Activated CD4-positive, alpha-beta T cell treated with anti-CD3 and anti-CD28 coated beads for 36 hours (primary cell): ENCODE measurements at regions of chr15 and their contacts with region 1.

Region 1: GRCh38 chr15:41116116-41116871 is at the start of gene INO80:
- DNase-seq: peak; percentile 99
- ATAC-seq: peak; percentile 85
- H3K4me3 Mint-ChIP-seq: peak within 1 kb of the TSS; percentile 80
- H3K27ac Mint-ChIP-seq: peak within 1 kb of the TSS; percentile 98
- H3K4me1 Mint-ChIP-seq: peaks cover 24% of the 10 kb centered on the region
- H3K27me3 Mint-ChIP-seq: no peaks in the 10 kb centered on the region
- total RNA-seq, gene INO80: 22.2 to 25.1 TPM

Region 2: DNA sequence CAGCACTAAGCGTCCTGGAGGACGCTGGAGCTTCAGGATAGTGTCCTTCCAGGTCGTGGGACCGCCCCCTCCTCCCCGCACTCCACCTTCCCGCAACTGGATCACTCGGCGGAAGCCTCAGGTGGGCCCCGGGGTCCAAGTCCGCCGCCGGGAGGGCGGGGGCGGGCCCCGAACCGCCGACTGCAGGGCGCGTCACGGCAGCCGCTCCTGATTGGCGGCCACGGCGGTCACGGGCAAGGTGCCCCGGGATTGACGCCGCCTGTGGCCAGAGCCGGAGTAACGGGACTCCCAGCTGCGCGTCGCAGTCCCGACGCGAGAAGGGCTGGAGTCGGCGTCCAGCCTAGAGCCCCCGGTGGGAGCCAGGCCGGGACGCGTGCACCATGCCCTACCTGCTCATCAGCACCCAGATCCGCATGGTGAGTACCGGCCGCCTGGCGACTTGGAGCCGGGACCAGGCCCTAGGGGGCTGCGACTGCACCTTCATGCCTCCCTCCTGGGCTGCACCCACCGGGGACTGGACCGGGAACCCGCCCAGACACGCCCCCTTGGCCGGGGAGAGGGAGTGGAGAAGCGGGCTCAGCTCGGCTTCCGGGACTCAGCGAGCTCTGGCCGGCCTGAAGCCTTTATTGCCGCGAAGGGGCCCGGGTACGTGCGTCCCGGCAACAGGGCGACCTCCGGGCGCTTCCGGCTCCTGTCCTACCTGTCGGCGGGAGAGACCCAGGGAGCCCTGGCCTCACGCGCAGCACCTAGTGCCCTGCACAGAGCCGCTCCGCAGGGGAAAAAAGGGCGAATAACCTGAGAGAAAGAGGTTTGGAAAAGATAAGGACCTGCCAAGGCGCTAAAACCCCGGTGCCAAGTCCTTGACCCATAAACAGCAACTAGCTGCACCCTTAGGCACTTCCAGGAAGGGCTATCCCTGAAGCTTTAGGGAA is 352.2 kb before region 1 on chr15 and contains the start of gene GCHFR:
- CTCF ChIA-PET with region 1: no interaction called
- POLR2A ChIA-PET with region 1: no interaction called
- intact Hi-C with region 1: loop called in 1 of 2 experiments (anchors 2 kb)
- DNase-seq: peak; percentile 85
- ATAC-seq: peak; percentile 73
- H3K4me3 Mint-ChIP-seq: peak within 1 kb of the TSS; percentile 79
- H3K27ac Mint-ChIP-seq: peak within 1 kb of the TSS; percentile 90
- H3K4me1 Mint-ChIP-seq: peaks cover 35% of the 10 kb centered on the region
- H3K27me3 Mint-ChIP-seq: no peaks in the 10 kb centered on the region
- total RNA-seq, gene GCHFR: 32.8 to 41.1 TPM

Region 3: GRCh38 chr15:40925875-40926658 is 190.2 kb before region 1 on chr15:
- CTCF ChIA-PET with region 1: no interaction called
- POLR2A ChIA-PET with region 1: no interaction called
- intact Hi-C with region 1: no loop called
- DNase-seq: peak; percentile 39
- ATAC-seq: no peak
- H3K4me3 Mint-ChIP-seq: no peak overlapping the region
- H3K27ac Mint-ChIP-seq: no peak overlapping the region
- H3K4me1 Mint-ChIP-seq: peaks cover 31% of the 10 kb centered on the region
- H3K27me3 Mint-ChIP-seq: peaks cover 40% of the 10 kb centered on the region

Region 4: DNA sequence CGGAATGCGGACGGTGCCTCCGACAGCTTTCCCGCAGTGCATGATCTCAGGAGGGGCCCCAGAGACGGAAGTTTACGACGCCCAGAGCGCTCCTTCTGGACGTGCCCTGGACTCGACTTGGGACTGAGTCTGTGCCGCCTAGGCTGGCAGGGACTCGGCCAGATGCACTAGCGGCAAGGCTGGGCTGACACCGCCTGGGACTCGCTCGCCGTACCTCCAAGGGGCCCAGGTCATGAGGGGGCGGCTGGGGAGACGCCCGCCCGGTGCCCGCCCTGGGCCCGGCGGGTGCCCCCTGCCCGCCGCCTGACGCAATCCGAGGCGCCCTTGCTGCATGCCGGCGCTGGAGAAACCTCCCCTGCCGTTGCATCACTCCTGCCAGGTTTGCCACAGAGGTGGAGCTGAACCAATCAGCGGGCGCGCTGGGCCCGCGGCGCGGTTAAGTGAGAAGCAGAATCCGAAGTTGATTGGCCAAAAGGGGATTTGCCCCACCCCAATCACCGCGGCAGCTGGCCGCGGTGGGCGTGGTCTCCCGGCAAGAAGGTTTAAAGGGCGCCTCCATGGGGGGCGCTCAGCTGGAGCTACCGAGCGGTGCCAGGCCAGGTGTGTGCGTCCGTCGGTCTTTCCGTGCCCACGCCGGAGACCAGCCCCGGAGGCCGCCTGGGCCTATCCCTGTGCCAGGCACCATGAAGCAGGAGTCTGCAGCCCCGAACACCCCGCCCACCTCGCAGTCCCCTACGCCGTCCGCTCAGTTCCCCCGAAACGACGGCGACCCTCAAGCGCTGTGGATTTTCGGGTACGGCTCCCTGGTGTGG is 163.2 kb before region 1 on chr15 and contains the start of gene CHAC1:
- CTCF ChIA-PET with region 1: no interaction called
- POLR2A ChIA-PET with region 1: no interaction called
- intact Hi-C with region 1: loop called (anchors 1 kb)
- DNase-seq: peak; percentile 99
- ATAC-seq: peak; percentile 92
- H3K4me3 Mint-ChIP-seq: peak within 1 kb of the TSS; percentile 93
- H3K27ac Mint-ChIP-seq: peak within 1 kb of the TSS; percentile 97
- H3K4me1 Mint-ChIP-seq: peaks cover 25% of the 10 kb centered on the region
- H3K27me3 Mint-ChIP-seq: peaks cover 2% of the 10 kb centered on the region
- total RNA-seq, gene CHAC1: 31.1 to 32.2 TPM

Region 5: GRCh38 chr15:41331833-41332787 is 215.8 kb after region 1 on chr15 and contains the start of gene OIP5:
- CTCF ChIA-PET with region 1: no interaction called
- POLR2A ChIA-PET with region 1: interaction called, 5 read pairs
- intact Hi-C with region 1: loop called (anchors 1 to 5 kb)
- DNase-seq: peak; percentile 99
- ATAC-seq: peak; percentile 98
- H3K4me3 Mint-ChIP-seq: peak within 1 kb of the TSS; percentile 91
- H3K27ac Mint-ChIP-seq: peak within 1 kb of the TSS; percentile 92
- H3K4me1 Mint-ChIP-seq: peaks cover 26% of the 10 kb centered on the region
- H3K27me3 Mint-ChIP-seq: no peaks in the 10 kb centered on the region
- total RNA-seq, gene OIP5: 11.5 to 14.0 TPM

Region 6: GRCh38 chr15:41557673-41558399 is 441.5 kb after region 1 on chr15:
- CTCF ChIA-PET with region 1: no interaction called
- POLR2A ChIA-PET with region 1: no interaction called
- intact Hi-C with region 1: loop called in 1 of 2 experiments (anchors 1 kb)
- DNase-seq: peak; percentile 85
- ATAC-seq: peak; percentile 75
- H3K4me3 Mint-ChIP-seq: peak overlapping the region; percentile 69
- H3K27ac Mint-ChIP-seq: peak overlapping the region; percentile 45
- H3K4me1 Mint-ChIP-seq: peaks cover 20% of the 10 kb centered on the region
- H3K27me3 Mint-ChIP-seq: peaks cover 10% of the 10 kb centered on the region

Region 7: DNA sequence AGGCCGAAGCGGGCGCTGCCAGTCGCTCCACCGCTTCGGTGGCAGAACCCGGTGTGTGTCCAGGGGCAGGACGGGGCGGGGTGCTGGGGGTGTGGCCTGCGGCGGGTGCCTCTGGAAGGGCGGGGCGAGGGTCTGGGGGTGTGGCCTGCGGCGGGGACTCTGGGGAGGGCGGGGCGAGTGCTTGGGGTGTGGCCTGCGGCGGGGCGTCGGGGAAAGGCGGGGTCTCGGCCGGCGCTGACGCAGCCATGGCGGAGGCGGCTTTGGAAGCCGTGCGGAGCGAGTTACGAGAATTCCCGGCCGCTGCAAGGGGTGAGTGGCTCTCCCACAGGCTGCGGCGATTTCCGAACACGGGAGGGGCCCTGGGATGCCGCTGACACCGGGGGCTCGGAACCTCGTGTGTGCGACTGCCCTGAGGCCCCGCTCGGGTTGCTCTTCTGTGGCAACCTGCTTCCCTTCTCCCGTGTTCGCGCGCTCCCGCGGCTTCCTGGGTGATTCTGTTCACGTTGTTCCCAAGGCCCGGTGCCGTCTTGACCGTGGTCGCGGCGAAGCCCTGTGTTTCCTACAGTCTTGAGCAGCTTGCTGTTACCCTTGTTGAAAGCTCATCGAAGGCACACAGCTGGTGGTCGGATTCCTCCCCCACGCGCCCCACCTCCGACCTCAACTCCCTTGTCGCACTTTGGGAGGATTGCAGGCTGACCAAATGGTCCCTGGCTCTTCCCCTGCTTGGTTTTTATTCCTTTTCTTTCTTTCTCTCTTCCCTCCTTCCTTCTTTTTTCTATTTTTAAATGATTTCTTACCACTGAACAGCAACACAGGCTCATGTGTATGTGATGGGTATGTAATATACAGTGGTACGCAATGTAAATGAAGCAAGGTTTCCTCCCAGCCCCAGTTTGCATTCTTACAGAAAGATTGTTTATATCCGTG is 711.8 kb after region 1 on chr15 and contains the start of gene JMJD7:
- CTCF ChIA-PET with region 1: no interaction called
- POLR2A ChIA-PET with region 1: no interaction called
- intact Hi-C with region 1: loop called in 1 of 2 experiments (anchors 5 kb)
- DNase-seq: peak; percentile 99
- ATAC-seq: peak; percentile 96
- H3K4me3 Mint-ChIP-seq: peak within 1 kb of the TSS; percentile 80
- H3K27ac Mint-ChIP-seq: peak within 1 kb of the TSS; percentile 69
- H3K4me1 Mint-ChIP-seq: peaks cover 41% of the 10 kb centered on the region
- H3K27me3 Mint-ChIP-seq: no peaks in the 10 kb centered on the region
- total RNA-seq, gene JMJD7: 17.1 to 17.6 TPM